IMR-90 (cell line): ENCODE measurements at regions of chr12 and their contacts with region 1.

Region 1: GRCh38 chr12:75526655-75527511 is 15.5 kb upstream of the KRR1 start:
- DNase-seq: peak; percentile 84
- ATAC-seq: peak; percentile 78
- H3K4me3 ChIP-seq: no peak overlapping the region
- H3K27ac ChIP-seq: peak overlapping the region; percentile 98
- H3K4me1 ChIP-seq: peaks cover 11% of the 10 kb centered on the region
- H3K27me3 ChIP-seq: no peaks in the 10 kb centered on the region
- CTCF ChIP-seq: peak; percentile 82
- POLR2A ChIP-seq: no peak
- RAD21 ChIP-seq: peak; percentile 92

Region 2: DNA sequence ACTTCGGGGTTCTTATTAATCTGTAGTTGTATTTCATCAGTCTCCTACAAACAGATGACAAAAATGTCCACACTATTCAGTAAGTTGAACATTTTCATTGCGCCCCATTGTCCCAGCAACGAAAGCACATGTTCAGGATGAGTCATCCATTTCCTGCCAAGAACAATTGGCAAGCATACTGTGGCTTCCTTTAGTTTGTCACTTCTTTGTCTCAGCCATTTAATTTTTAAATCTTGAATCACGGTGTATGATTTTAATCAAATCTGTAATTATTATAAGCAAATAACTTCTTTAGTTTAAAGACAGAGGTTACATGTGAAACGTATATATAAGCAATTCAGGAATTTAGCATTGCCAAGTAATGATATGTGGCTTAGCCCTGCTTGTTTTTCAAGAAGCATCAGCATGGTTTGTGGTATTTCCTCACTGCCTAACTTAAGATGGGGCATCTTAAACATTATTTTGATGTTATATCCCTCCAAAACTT is 195.9 kb after region 1 on chr12:
- CTCF ChIA-PET with region 1: no interaction called
- POLR2A ChIA-PET with region 1: no interaction called
- dilution Hi-C with region 1: no loop called
- in situ Hi-C with region 1: no loop called
- intact Hi-C with region 1: loop called (anchors 2 kb)
- DNase-seq: peak; percentile 93
- ATAC-seq: peak; percentile 13
- H3K4me3 ChIP-seq: no peak overlapping the region
- H3K27ac ChIP-seq: peak overlapping the region; percentile 93
- H3K4me1 ChIP-seq: peaks cover 29% of the 10 kb centered on the region
- H3K27me3 ChIP-seq: no peaks in the 10 kb centered on the region
- CTCF ChIP-seq: no peak
- POLR2A ChIP-seq: no peak
- RAD21 ChIP-seq: 0 out of 2 replicates have a peak, but pooled peaks have one; percentile 10

Region 3: GRCh38 chr12:75747572-75748021 is 220.7 kb after region 1 on chr12:
- CTCF ChIA-PET with region 1: interaction called, 4 read pairs
- POLR2A ChIA-PET with region 1: no interaction called
- dilution Hi-C with region 1: no loop called
- in situ Hi-C with region 1: no loop called
- intact Hi-C with region 1: loop called (anchors 2 kb)
- DNase-seq: peak; percentile 92
- ATAC-seq: peak; percentile 70
- H3K4me3 ChIP-seq: no peak overlapping the region
- H3K27ac ChIP-seq: peak overlapping the region; percentile 88
- H3K4me1 ChIP-seq: peaks cover 14% of the 10 kb centered on the region
- H3K27me3 ChIP-seq: no peaks in the 10 kb centered on the region
- CTCF ChIP-seq: no peak
- POLR2A ChIP-seq: no peak
- RAD21 ChIP-seq: no peak

Region 4: GRCh38 chr12:75820848-75821578 is 294.1 kb after region 1 on chr12:
- CTCF ChIA-PET with region 1: interaction called, 7 read pairs
- POLR2A ChIA-PET with region 1: no interaction called
- dilution Hi-C with region 1: no loop called
- in situ Hi-C with region 1: no loop called
- intact Hi-C with region 1: loop called (anchors 2 kb)
- DNase-seq: peak; percentile 97
- ATAC-seq: peak; percentile 71
- H3K4me3 ChIP-seq: no peak overlapping the region; the same call in 1 of the 2 replicates
- H3K27ac ChIP-seq: peak overlapping the region; percentile 40
- H3K4me1 ChIP-seq: peaks cover 33% of the 10 kb centered on the region
- H3K27me3 ChIP-seq: no peaks in the 10 kb centered on the region
- CTCF ChIP-seq: peak; percentile 18; the same call in 1 of the 2 replicates
- POLR2A ChIP-seq: no peak
- RAD21 ChIP-seq: 0 out of 2 replicates have a peak, but pooled peaks have one; percentile 20

Region 5: GRCh38 chr12:75954041-75954440 is 427.2 kb after region 1 on chr12:
- CTCF ChIA-PET with region 1: no interaction called
- POLR2A ChIA-PET with region 1: no interaction called
- dilution Hi-C with region 1: no loop called
- in situ Hi-C with region 1: no loop called
- intact Hi-C with region 1: no loop called
- DNase-seq: peak; percentile 97
- ATAC-seq: peak; percentile 81
- H3K4me3 ChIP-seq: no peak overlapping the region
- H3K27ac ChIP-seq: peak overlapping the region; percentile 91
- H3K4me1 ChIP-seq: peaks cover 18% of the 10 kb centered on the region
- H3K27me3 ChIP-seq: no peaks in the 10 kb centered on the region
- CTCF ChIP-seq: no peak
- POLR2A ChIP-seq: no peak
- RAD21 ChIP-seq: peak; percentile 21; the same call in 1 of the 2 replicates

Region 6: GRCh38 chr12:76455582-76456345 is 928.9 kb after region 1 on chr12:
- CTCF ChIA-PET with region 1: no interaction called
- POLR2A ChIA-PET with region 1: no interaction called
- dilution Hi-C with region 1: no loop called
- in situ Hi-C with region 1: loop called (anchors 25 kb)
- intact Hi-C with region 1: no loop called
- DNase-seq: peak; percentile 95
- ATAC-seq: peak; percentile 95
- H3K4me3 ChIP-seq: no peak overlapping the region
- H3K27ac ChIP-seq: no peak overlapping the region
- H3K4me1 ChIP-seq: peaks cover 2% of the 10 kb centered on the region; the same call in 1 of the 2 replicates
- H3K27me3 ChIP-seq: no peaks in the 10 kb centered on the region
- CTCF ChIP-seq: peak; percentile 79
- POLR2A ChIP-seq: no peak
- RAD21 ChIP-seq: peak; percentile 83

Region 7: DNA sequence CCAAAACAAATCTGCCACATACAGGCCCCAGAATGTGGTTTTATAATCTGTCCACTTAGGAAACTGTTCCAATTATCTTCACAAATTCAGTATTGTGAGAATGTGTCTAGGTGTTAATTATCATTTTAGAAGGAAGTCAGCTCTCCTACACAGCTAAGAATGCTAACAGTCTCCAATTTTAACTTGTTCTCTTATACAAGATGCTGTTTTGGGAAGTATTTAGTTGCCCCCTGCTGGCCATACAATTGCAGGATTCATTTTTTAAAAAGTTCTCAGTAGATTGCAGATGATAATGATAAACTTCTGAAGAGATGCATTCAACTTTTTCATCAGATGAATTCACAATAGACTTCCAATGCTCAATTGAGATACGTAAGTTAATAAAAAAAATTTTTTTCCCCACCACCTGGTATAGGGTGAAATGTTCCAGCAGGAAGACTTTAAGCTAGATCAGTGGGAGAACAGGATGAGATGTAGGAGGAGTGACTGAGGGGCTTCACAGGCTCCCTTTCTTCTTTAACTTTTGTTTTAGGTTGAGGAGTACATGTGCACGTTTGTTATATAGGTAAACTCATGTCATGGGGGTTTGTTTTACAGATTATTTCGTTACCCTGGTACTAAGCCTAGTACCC is 1060.0 kb after region 1 on chr12:
- CTCF ChIA-PET with region 1: no interaction called
- POLR2A ChIA-PET with region 1: no interaction called
- dilution Hi-C with region 1: no loop called
- in situ Hi-C with region 1: no loop called
- intact Hi-C with region 1: loop called (anchors 5 kb)
- DNase-seq: peak; percentile 67
- ATAC-seq: peak; percentile 55; the same call in 1 of the 2 replicates
- H3K4me3 ChIP-seq: no peak overlapping the region
- H3K27ac ChIP-seq: no peak overlapping the region
- H3K4me1 ChIP-seq: peaks cover 8% of the 10 kb centered on the region
- H3K27me3 ChIP-seq: no peaks in the 10 kb centered on the region
- CTCF ChIP-seq: peak; percentile 71
- POLR2A ChIP-seq: no peak
- RAD21 ChIP-seq: peak; percentile 68